Dorsolateral prefrontal cortex (tissue), 120 donors: ENCODE measurements at regions of chr3 and their contacts with region 1.

Region 1: DNA sequence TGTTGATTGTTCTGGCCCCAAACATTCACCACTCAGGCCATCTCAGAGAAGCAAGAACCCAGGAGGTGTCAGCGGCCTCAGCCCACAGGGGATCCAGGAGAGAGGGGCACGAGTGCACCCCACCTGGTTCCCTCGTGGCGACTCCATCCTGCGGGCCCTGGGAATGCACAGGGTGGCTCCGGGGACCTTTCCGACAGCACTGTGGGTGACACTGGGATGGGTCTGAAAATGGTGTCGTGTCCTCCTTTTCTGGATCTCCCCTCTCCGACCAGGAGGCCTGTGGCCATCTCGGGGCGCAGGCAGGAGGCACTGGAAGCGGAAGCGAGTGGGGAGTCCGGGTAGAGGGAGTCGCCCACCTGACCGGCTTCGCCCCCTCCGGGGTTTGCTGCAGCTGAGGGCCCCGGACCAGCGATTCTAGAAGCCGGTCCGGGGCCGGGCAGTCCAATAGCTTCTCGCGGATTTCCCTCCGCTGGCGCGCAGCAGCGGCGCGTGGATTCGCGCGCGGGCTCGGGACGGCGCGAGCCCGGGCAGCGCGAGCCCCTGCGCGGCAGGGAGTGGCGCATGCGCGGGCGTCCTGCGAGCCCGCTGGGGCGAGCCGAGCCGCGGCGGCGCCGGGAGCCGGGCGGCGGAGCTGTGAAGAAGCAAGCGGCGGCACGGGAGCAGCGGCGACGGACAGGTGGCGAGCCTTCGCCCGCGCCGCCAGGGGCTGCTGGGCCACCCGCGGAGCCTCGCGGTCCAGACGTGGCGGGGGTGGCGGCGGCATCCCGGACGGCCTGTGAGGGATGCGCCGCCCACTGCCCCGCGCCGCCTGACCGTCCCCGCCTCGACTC is at the start of gene DOCK3:
- DNase-seq: peak in 8 of 10 donors; percentile 16 to 81 (median 50)
- H3K4me3 ChIP-seq: peak within 1 kb of the TSS; percentile 44 to 81 (median 69)
- H3K27ac ChIP-seq: peak within 1 kb of the TSS in 56 of 59 donors; percentile 21 to 90 (median 74)
- H3K27me3 ChIP-seq: no peaks in the 10 kb centered on the region
- CTCF ChIP-seq: peak in 1 of 56 donors; percentile 15
- total RNA-seq, gene DOCK3: 58.3 to 141 (median 105) TPM

Region 2: DNA sequence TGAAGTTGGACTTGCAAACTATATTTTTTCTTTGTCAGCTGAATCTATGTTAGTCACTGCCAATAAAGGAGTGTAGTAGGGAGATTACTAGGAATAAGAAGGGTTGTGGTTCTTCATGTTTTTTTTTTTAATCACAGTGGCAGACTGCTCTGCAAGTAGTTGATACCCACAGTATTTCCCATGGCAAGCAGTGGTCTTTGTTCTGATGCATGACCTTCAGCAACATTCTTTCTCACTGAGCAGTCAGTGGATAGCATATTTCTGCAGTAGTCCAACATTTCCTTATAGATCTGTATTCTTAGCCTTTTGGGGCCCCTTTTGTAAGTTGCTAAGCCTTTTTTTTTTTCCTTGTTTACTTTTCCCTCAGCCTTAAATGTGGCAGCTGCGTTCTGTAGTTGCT is 151.3 kb after region 1 on chr3:
- intact Hi-C with region 1: loop called in 1 of 2 experiments (anchors 10 kb)
- DNase-seq: no peak
- H3K4me3 ChIP-seq: no peak overlapping the region
- H3K27ac ChIP-seq: peak overlapping the region in 1 of 59 donors; percentile 37
- H3K27me3 ChIP-seq: no peaks in the 10 kb centered on the region
- CTCF ChIP-seq: no peak

Region 3: GRCh38 chr3:51031666-51032065 is 357.1 kb after region 1 on chr3:
- intact Hi-C with region 1: no loop called
- DNase-seq: no peak
- H3K4me3 ChIP-seq: no peak overlapping the region
- H3K27ac ChIP-seq: no peak overlapping the region
- H3K27me3 ChIP-seq: no peaks in the 10 kb centered on the region
- CTCF ChIP-seq: no peak

Region 4: GRCh38 chr3:51384726-51385473 is 710.3 kb after region 1 on chr3 and contains the start of gene MANF:
- intact Hi-C with region 1: loop called (anchors 5 kb)
- DNase-seq: peak; percentile 92 to 99 (median 98)
- H3K4me3 ChIP-seq: peak within 1 kb of the TSS; percentile 65 to 99 (median 93)
- H3K27ac ChIP-seq: peak within 1 kb of the TSS; percentile 34 to 98 (median 94)
- H3K27me3 ChIP-seq: no peaks in the 10 kb centered on the region
- CTCF ChIP-seq: peak in 35 of 56 donors; percentile 9 to 59 (median 37)
- total RNA-seq, gene MANF: 12.0 to 80.8 (median 29.0) TPM